HCT116 (cell line): ENCODE measurements at regions of chr2 and their contacts with region 1.

Region 1: GRCh38 chr2:74876081-74876886 is 42.4 kb downstream of the HK2 start:
- DNase-seq: no peak
- ATAC-seq: peak; percentile 89
- H3K4me3 ChIP-seq: no peak overlapping the region
- H3K27ac ChIP-seq: peak overlapping the region; percentile 18; the same call in 1 of the 2 replicates
- H3K4me1 ChIP-seq: no peaks in the 10 kb centered on the region
- H3K27me3 ChIP-seq: no peaks in the 10 kb centered on the region
- CTCF ChIP-seq: peak; percentile 40 to 77 (median 77)
- POLR2A ChIP-seq: no peak
- RAD21 ChIP-seq: peak; percentile 83

Region 2: DNA sequence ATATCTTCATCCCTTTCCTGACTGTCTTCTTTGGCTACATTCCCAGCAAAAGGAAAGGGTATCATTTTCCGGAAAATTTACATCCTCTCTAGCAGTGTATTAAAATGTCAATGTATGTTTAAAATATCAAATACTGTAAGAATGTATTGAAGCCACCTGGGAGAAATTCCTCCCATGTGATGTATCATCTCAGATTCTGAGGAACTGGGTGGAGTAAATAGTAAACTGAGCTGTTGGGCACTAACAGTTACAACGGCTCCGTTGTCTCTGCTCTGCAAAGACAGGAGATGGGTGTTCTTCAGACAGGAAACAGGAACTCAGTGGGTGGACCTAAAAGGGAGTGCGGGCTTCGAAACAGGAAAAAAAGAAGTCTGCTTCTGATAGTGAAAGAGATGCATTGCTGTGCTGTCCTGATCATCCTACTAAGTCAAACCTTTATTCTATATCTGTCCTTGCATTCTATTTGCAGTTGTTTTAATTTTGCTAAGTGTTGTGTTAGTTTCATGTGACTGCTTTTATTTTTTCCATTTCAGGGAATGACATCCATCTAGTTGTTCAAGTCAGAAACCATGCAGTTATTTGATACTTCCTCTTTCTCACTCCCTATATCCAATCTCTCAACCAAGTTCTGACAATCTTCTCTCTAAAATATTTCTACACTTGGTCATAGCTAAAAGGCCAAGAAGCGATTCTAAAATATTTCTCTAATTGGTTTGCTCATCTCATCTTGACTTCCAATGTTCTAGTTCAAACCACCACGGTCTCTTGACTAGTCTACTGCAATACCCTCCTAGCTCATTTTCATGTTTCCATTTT is 302.3 kb before region 1 on chr2:
- CTCF ChIA-PET with region 1: no interaction called
- POLR2A ChIA-PET with region 1: no interaction called
- RAD21 ChIA-PET with region 1: no interaction called
- intact Hi-C with region 1: no loop called
- DNase-seq: no peak
- ATAC-seq: no peak
- H3K4me3 ChIP-seq: no peak overlapping the region
- H3K27ac ChIP-seq: no peak overlapping the region
- H3K4me1 ChIP-seq: peaks cover 0 to 3% of the 10 kb centered on the region in 2 experiments; a peak in 1 of 4 replicates
- H3K27me3 ChIP-seq: no peaks in the 10 kb centered on the region
- CTCF ChIP-seq: no peak
- POLR2A ChIP-seq: no peak
- RAD21 ChIP-seq: no peak

Region 3: GRCh38 chr2:74602586-74603281 is 273.6 kb before region 1 on chr2:
- CTCF ChIA-PET with region 1: no interaction called
- POLR2A ChIA-PET with region 1: no interaction called
- RAD21 ChIA-PET with region 1: no interaction called
- intact Hi-C with region 1: no loop called
- DNase-seq: no peak
- ATAC-seq: peak; percentile 46; the same call in 1 of the 2 replicates
- H3K4me3 ChIP-seq: no peak overlapping the region
- H3K27ac ChIP-seq: no peak overlapping the region
- H3K4me1 ChIP-seq: peaks cover 4 to 6% of the 10 kb centered on the region in 2 experiments; a peak in 2 of 4 replicates
- H3K27me3 ChIP-seq: no peaks in the 10 kb centered on the region
- CTCF ChIP-seq: no peak
- POLR2A ChIP-seq: no peak
- RAD21 ChIP-seq: no peak

Region 4: GRCh38 chr2:74648009-74648443 is 228.3 kb before region 1 on chr2 and contains the start of gene M1AP:
- CTCF ChIA-PET with region 1: no interaction called
- POLR2A ChIA-PET with region 1: no interaction called
- RAD21 ChIA-PET with region 1: no interaction called
- intact Hi-C with region 1: no loop called
- DNase-seq: peak; percentile 75
- ATAC-seq: peak; percentile 95
- H3K4me3 ChIP-seq: peak within 1 kb of the TSS; percentile 50 to 69
- H3K27ac ChIP-seq: peak within 1 kb of the TSS; percentile 59
- H3K4me1 ChIP-seq: peaks cover 6 to 19% of the 10 kb centered on the region in 2 experiments
- H3K27me3 ChIP-seq: no peaks in the 10 kb centered on the region
- CTCF ChIP-seq: peak; percentile 61 to 64 (median 62); a peak in 5 of 6 replicates
- POLR2A ChIP-seq: peak; percentile 33
- RAD21 ChIP-seq: peak; percentile 58
- total RNA-seq, gene M1AP: 28.2 TPM

Region 5: GRCh38 chr2:74690571-74690970 is 185.7 kb before region 1 on chr2:
- CTCF ChIA-PET with region 1: interaction called, 46 read pairs
- POLR2A ChIA-PET with region 1: no interaction called
- RAD21 ChIA-PET with region 1: no interaction called
- intact Hi-C with region 1: loop called (anchors 1 kb)
- DNase-seq: peak; percentile 49
- ATAC-seq: peak; percentile 87
- H3K4me3 ChIP-seq: no peak overlapping the region
- H3K27ac ChIP-seq: no peak overlapping the region
- H3K4me1 ChIP-seq: no peaks in the 10 kb centered on the region
- H3K27me3 ChIP-seq: no peaks in the 10 kb centered on the region
- CTCF ChIP-seq: peak; percentile 71 to 87 (median 76); a peak in 5 of 6 replicates
- POLR2A ChIP-seq: no peak
- RAD21 ChIP-seq: peak; percentile 94

Region 6: DNA sequence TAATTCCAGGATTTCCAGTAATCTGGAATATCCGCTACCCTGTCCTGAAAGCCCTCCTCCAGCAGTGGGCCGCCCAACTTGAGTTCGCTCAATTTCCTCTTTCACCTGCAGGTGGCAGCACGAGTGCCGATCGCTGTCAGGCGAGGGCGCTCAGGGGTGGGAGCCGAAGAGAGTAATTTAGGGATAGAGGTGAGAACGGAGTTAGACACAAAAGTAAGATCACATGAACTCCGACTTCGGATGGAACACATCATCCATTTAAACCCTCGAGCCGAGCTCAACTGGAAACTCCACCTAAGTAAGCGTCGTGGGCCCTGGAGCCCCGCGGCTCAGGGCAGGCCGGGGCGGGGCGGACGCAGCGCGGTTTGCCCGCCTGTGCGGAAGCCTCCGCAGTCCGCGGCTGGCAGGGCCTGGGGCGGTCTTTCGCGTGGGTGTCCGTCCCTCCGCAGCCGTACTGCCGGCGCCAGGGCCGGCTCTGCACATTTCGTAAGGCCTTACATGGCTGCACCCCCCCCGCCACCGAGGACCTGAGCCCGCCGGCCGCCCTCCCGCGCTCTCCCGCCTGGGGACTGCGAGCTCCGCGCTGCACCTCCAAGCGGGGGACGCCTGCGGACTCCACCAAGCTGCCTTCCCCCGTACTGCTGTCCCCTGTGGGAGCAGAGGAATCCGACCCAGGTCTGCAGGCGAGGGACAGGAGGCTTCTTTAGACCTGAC is 161.0 kb before region 1 on chr2:
- CTCF ChIA-PET with region 1: interaction called, 9 read pairs
- POLR2A ChIA-PET with region 1: interaction called, 3 read pairs
- RAD21 ChIA-PET with region 1: no interaction called
- intact Hi-C with region 1: loop called (anchors 1 kb)
- DNase-seq: peak; percentile 64
- ATAC-seq: peak; percentile 94
- H3K4me3 ChIP-seq: peak overlapping the region; percentile 45 to 67
- H3K27ac ChIP-seq: no peak overlapping the region; the same call in 1 of the 2 replicates
- H3K4me1 ChIP-seq: peaks cover 0 to 18% of the 10 kb centered on the region in 2 experiments; a peak in 2 of 4 replicates
- H3K27me3 ChIP-seq: no peaks in the 10 kb centered on the region
- CTCF ChIP-seq: peak; percentile 84 to 96 (median 95)
- POLR2A ChIP-seq: no peak
- RAD21 ChIP-seq: peak; percentile 89

Region 7: DNA sequence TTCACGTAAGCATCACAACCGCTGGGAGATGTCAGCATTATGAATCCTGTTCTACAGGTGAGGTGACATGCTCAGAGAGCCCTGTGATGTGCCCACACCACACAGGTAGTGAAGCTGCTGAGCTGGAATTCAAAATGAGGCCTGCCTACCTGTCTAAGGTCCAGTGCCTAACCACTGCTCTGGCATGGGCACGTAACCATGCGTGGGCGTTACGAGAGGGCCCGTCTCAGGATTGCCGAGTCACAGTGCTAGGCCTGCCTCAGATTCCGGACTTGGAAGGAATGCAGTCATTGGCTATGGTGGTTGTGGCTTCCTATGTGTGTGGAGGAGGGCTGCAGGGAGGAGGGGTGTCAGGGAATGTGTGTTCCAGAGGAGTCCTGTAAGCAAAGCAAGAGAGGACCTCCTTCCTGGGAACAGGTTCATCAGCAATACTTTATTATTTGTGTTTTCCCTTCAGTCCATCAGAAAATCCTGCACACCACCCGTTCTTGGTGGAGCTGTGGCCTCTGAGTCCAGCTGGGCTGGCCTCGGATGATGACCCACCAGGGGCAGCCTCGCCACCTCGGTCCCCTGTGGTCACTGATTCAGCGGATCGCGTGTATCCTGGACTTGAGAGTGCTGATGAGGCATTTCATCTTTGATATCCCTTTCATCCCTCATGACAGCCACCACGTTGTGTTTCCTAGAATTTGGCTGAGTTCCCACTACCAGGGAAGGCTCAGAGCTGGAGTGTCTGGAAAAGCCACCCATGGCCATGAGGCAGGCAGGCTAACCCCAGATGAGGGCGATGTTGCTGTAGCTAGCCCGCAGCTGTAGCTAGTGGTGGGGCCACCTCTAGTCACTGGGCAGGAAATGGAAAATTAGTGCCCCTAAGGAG is 11.2 kb before region 1 on chr2:
- CTCF ChIA-PET with region 1: interaction called, 13 read pairs
- POLR2A ChIA-PET with region 1: no interaction called
- RAD21 ChIA-PET with region 1: no interaction called
- intact Hi-C with region 1: no loop called
- DNase-seq: peak; percentile 54
- ATAC-seq: peak; percentile 73
- H3K4me3 ChIP-seq: peak overlapping the region in 1 of 2 experiments; percentile 13; a peak in 2 of 4 replicates
- H3K27ac ChIP-seq: peak overlapping the region; percentile 74
- H3K4me1 ChIP-seq: peaks cover 62 to 71% of the 10 kb centered on the region in 2 experiments
- H3K27me3 ChIP-seq: no peaks in the 10 kb centered on the region
- CTCF ChIP-seq: peak in 1 of 3 experiments; percentile 18; a peak in 1 of 6 replicates
- POLR2A ChIP-seq: no peak
- RAD21 ChIP-seq: no peak

Region 8: GRCh38 chr2:75021657-75022056 is 145.4 kb after region 1 on chr2:
- CTCF ChIA-PET with region 1: no interaction called
- POLR2A ChIA-PET with region 1: no interaction called
- RAD21 ChIA-PET with region 1: no interaction called
- intact Hi-C with region 1: no loop called
- DNase-seq: no peak
- ATAC-seq: no peak
- H3K4me3 ChIP-seq: no peak overlapping the region
- H3K27ac ChIP-seq: no peak overlapping the region
- H3K4me1 ChIP-seq: no peaks in the 10 kb centered on the region
- H3K27me3 ChIP-seq: no peaks in the 10 kb centered on the region
- CTCF ChIP-seq: no peak
- POLR2A ChIP-seq: no peak
- RAD21 ChIP-seq: no peak